Common myeloid progenitor, CD34-positive (primary cell): ENCODE measurements at regions of chr21 and their contacts with region 1.

Region 1: DNA sequence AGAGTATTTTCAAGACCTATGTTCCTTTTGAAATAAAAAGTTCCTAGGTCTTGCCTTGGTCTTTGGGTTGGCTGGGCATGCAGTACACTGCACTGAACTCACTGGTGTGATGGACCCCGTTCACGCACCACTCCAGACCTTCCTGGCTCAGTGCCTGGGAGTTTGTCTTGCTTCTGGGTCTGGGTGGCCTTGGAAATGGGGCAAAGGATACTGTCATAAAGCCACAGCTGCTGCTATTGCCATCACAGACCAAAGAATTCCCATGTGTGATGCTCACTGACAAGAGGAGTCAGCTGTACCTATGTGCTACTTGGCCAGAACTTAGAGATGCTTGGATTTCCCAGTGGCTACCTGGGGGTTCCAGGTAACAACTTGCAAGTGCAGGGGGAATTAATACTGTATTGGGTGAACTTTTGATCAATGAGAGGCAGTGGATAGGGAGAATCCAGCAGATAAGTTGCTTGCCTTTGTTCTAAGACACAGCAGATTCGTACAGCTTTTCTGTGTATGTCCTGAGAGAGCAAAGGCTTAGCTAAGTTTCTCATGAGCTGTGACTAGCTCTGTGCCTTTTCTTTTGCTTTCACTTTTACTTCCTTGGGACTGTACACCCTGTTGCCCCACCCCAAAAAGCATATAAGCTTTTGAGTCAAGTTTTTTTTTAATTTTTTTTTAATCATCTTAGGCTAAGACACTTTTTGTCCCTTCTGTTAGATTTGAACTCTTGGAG is 115.3 kb downstream of the RUNX1 start:
- DNase-seq: peak; percentile 62 to 88 (median 86)
- H3K4me3 ChIP-seq: peak overlapping the region in 4 of 7 experiments; percentile 27 to 63 (median 40)
- H3K27ac ChIP-seq: peak overlapping the region; percentile 25 to 67
- H3K4me1 ChIP-seq: peaks cover 26 to 79% (median 46%) of the 10 kb centered on the region in 4 experiments
- H3K27me3 ChIP-seq: no peaks in the 10 kb centered on the region

Region 2: GRCh38 chr21:34857874-34858273 is 75.9 kb before region 1 on chr21:
- CTCF ChIA-PET with region 1: no interaction called
- POLR2A ChIA-PET with region 1: no interaction called
- DNase-seq: no peak
- H3K4me3 ChIP-seq: no peak overlapping the region
- H3K27ac ChIP-seq: no peak overlapping the region
- H3K4me1 ChIP-seq: no peaks in the 10 kb centered on the region
- H3K27me3 ChIP-seq: no peaks in the 10 kb centered on the region

Region 3: GRCh38 chr21:34908419-34909055 is 25.2 kb before region 1 on chr21:
- CTCF ChIA-PET with region 1: interaction called, 12 read pairs
- POLR2A ChIA-PET with region 1: interaction called, 4 read pairs
- DNase-seq: peak; percentile 97 to 99 (median 99)
- H3K4me3 ChIP-seq: peak overlapping the region in 4 of 7 experiments; percentile 27 to 68 (median 63)
- H3K27ac ChIP-seq: peak overlapping the region; percentile 94 to 99
- H3K4me1 ChIP-seq: peaks cover 70 to 98% (median 84%) of the 10 kb centered on the region in 4 experiments
- H3K27me3 ChIP-seq: no peaks in the 10 kb centered on the region

Region 4: DNA sequence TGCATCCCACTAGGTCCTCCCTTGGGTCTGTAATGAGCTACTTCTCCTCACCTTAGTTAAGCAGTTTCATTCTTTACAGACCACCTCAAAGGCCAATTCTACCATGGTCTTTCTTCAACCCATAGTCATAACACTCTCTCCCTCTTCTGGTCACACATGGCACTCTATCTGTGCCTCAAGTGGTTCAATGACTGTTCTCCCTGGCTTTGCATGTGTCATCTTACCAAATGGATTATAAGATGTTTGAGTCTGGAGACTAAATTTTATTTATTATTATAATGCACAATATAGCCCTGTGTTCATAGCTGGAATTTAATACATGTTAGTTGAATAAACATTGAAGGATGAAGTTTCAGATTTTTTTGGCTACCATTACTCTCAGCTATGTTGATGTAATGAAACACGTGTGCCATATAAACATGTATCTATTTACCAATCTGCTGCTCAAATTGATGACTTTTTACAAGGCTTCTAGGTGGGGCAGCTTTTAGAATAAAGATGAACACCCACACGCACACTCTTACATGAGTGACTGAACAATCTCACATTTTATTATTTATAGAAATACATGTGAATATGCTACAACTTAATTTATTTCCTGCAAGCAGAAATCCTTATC is 13.3 kb after region 1 on chr21:
- CTCF ChIA-PET with region 1: interaction called, 38 read pairs
- POLR2A ChIA-PET with region 1: interaction called, 4 read pairs
- DNase-seq: peak; percentile 38 to 74 (median 60)
- H3K4me3 ChIP-seq: no peak overlapping the region
- H3K27ac ChIP-seq: peak overlapping the region in 1 of 2 experiments; percentile 67
- H3K4me1 ChIP-seq: peaks cover 12 to 76% (median 66%) of the 10 kb centered on the region in 4 experiments
- H3K27me3 ChIP-seq: no peaks in the 10 kb centered on the region

Region 5: DNA sequence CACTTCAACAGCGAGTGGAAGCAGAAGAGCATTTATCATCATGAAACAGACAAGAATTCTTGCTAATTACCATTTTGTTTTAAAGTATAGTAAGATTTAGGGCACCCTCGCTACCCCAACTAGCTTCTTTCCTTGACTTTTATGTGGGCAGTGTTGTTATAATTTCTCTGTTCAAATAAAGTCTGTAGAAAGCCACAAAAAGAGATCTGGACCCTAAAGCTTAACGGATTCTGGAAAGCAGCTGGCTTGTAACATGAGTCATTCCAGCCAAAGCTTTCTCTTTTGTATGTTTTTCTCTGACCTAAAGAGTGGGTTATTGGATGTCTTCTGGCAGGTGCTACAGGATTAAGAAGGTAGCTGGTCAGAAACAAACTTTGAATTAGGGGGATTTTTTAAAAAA is 77.9 kb after region 1 on chr21:
- CTCF ChIA-PET with region 1: no interaction called
- POLR2A ChIA-PET with region 1: no interaction called
- DNase-seq: peak in 2 of 3 donors; percentile 80 to 85
- H3K4me3 ChIP-seq: peak overlapping the region in 2 of 7 experiments; percentile 12 to 44
- H3K27ac ChIP-seq: peak overlapping the region; percentile 11 to 72
- H3K4me1 ChIP-seq: peaks cover 18 to 95% (median 34%) of the 10 kb centered on the region in 4 experiments
- H3K27me3 ChIP-seq: no peaks in the 10 kb centered on the region

Region 6: GRCh38 chr21:35204850-35205541 is 271.2 kb after region 1 on chr21:
- CTCF ChIA-PET with region 1: no interaction called
- POLR2A ChIA-PET with region 1: no interaction called
- DNase-seq: peak; percentile 70 to 82 (median 79)
- H3K4me3 ChIP-seq: peak overlapping the region in 6 of 7 experiments; percentile 54 to 87 (median 68)
- H3K27ac ChIP-seq: peak overlapping the region in 1 of 2 experiments; percentile 67
- H3K4me1 ChIP-seq: peaks cover 9 to 21% (median 15%) of the 10 kb centered on the region in 4 experiments
- H3K27me3 ChIP-seq: no peaks in the 10 kb centered on the region